ENCODE measurements at regions of chr1 and their contacts with region 1.

Region 1: GRCh38 chr1:32714277-32714676 is 11.7 kb upstream of the SYNC start:
- DNase-seq: no peak
- ATAC-seq: no peak
- H3K4me3 ChIP-seq: no peak overlapping the region
- H3K27ac ChIP-seq: no peak overlapping the region
- H3K4me1 ChIP-seq: peaks cover 17% of the 10 kb centered on the region
- H3K27me3 ChIP-seq: no peaks in the 10 kb centered on the region
- CTCF ChIP-seq: no peak

Region 2: DNA sequence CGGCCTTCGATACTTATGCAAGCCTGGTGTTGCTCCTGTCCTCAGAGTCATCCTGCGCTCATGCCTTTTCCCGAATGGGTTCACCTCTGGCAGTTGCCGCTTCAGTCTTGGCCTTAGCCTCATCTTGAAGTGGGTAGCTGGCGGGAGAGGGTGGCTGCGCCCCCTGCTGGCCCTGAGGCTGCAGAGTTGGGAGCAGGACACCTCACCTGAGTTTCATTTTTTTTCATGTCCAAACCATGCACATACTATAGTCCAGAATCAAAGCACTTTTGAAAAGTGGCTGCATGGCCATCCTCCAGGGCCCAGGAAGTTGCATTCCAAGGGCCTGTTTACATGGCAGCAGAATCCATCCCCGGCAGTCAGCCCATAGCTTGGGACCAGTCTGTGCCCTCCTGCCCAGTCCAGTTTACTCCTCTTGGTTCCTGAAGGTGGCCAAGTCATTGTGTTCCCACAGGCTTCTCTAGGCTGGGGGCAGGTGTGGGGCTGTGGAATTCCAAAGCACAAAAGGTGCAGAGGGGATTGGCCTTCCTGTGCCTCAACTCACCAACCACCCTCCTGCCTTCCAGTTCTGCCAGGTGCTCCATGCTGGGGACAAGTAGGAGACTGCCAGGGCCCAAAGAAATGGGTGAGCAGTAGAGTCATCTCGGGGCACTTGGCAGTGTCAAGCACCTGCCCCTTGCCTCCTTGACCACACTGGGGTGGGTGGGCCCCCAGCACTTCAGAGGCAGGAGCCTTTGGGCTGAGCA is 58.9 kb after region 1 on chr1:
- intact Hi-C with region 1: loop called (anchors 5 kb)
- DNase-seq: peak; percentile 91
- ATAC-seq: peak; percentile 88
- H3K4me3 ChIP-seq: no peak overlapping the region
- H3K27ac ChIP-seq: no peak overlapping the region
- H3K4me1 ChIP-seq: peaks cover 19% of the 10 kb centered on the region
- H3K27me3 ChIP-seq: no peaks in the 10 kb centered on the region
- CTCF ChIP-seq: peak; percentile 91

Region 3: GRCh38 chr1:32861904-32862695 is 147.8 kb after region 1 on chr1:
- intact Hi-C with region 1: no loop called
- DNase-seq: no peak
- ATAC-seq: peak; percentile 61
- H3K4me3 ChIP-seq: no peak overlapping the region
- H3K27ac ChIP-seq: no peak overlapping the region
- H3K4me1 ChIP-seq: no peaks in the 10 kb centered on the region
- H3K27me3 ChIP-seq: no peaks in the 10 kb centered on the region
- CTCF ChIP-seq: no peak